ENCODE measurements at regions of chr7 and their contacts with region 1.

Region 1: GRCh38 chr7:39145283-39145682 is 167.6 kb downstream of the POU6F2 start:
- DNase-seq: no peak
- H3K4me3 ChIP-seq: no peak overlapping the region
- H3K27ac ChIP-seq: no peak overlapping the region
- H3K4me1 ChIP-seq: no peaks in the 10 kb centered on the region
- H3K27me3 ChIP-seq: no peaks in the 10 kb centered on the region
- CTCF ChIP-seq: no peak
- POLR2A ChIP-seq: no peak

Region 2: GRCh38 chr7:38932509-38933168 is 212.6 kb before region 1 on chr7:
- intact Hi-C with region 1: no loop called
- DNase-seq: no peak
- H3K4me3 ChIP-seq: no peak overlapping the region
- H3K27ac ChIP-seq: no peak overlapping the region
- H3K4me1 ChIP-seq: no peaks in the 10 kb centered on the region
- H3K27me3 ChIP-seq: no peaks in the 10 kb centered on the region
- CTCF ChIP-seq: peak in 2 of 3 donors; percentile 55 to 61
- POLR2A ChIP-seq: no peak

Region 3: DNA sequence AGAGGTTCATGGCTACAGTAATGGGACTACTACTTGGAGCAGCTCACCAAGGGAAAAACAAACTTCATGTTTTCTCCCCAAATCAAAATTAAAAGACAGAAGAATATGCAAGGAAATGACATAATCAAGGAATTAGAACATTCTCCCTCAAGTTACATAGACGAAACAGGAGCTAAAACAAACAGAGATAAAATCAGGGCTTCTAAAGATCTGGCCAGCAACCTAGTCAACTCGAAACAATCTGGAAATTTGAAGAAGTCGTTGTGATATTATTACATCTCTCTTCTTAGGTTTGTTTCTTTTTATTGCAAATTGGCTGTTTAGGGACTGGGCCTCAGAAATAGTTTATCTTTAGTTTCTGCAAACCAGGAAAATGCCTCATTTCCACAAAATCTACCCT is 31.9 kb before region 1 on chr7:
- intact Hi-C with region 1: loop called (anchors 1 kb)
- DNase-seq: no peak
- H3K4me3 ChIP-seq: no peak overlapping the region
- H3K27ac ChIP-seq: no peak overlapping the region
- H3K4me1 ChIP-seq: no peaks in the 10 kb centered on the region
- H3K27me3 ChIP-seq: no peaks in the 10 kb centered on the region
- CTCF ChIP-seq: no peak
- POLR2A ChIP-seq: no peak